B cell (primary cell): ENCODE measurements at regions of chr1 and their contacts with region 1.

Region 1: GRCh38 chr1:24930204-24931145 is at the start of gene RUNX3:
- DNase-seq: peak; percentile 97
- ATAC-seq: peak; percentile 85
- H3K4me3 ChIP-seq: peak within 1 kb of the TSS; percentile 74 to 93 (median 78)
- H3K4me3 Mint-ChIP-seq: peak within 1 kb of the TSS; percentile 98
- H3K27ac ChIP-seq: peak within 1 kb of the TSS; percentile 95 to 97
- H3K27ac Mint-ChIP-seq: peak within 1 kb of the TSS; percentile 99
- H3K4me1 ChIP-seq: peaks cover 67 to 77% of the 10 kb centered on the region in 2 donors
- H3K4me1 Mint-ChIP-seq: peaks cover 72% of the 10 kb centered on the region
- H3K27me3 ChIP-seq: no peaks in the 10 kb centered on the region
- H3K27me3 Mint-ChIP-seq: no peaks in the 10 kb centered on the region
- CTCF ChIP-seq: no peak
- total RNA-seq, gene RUNX3: 116 and 127 TPM in 2 replicates

Region 2: DNA sequence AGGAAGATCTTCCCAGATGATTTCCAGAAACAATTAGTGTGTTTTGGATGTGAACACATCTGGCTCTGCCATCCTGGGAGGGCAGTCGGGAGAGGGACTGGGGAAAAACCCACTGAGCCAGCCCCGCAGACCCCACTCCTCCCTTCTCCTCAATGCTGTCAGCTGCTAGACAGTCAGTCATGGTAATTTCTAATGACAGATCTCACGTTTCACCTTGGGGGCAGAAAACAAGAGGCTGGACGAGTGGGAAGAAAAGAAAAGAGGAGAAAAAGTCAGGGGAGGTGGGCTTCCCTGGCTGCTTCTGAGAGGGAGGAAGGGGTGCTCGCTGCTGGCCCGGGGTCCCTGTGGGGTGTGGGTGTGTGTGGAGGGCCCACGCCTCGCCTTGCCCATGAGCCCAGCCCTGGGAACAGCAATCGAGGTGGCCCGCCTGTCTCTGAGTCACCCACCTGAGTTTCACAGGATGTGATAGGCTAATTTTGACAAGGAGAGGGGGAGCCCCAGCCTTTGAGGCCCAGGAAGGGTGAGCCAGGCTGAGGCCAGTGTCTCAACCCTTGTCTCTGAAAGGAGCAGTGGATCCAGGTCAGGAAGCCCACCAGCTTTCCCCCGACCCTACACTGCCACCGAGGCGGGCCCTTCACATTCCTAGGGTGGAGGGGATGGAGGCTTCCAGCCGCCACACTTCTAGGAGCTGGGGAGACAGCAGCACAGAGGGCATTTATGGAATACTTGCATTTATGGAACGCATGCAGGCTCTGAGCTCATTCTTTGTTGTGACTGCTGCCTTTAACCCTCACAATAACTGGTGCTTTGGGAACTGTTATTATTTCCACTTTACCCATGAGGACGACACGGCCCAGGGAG is 694.3 kb before region 1 on chr1:
- CTCF ChIA-PET with region 1: no interaction called
- POLR2A ChIA-PET with region 1: no interaction called
- intact Hi-C with region 1: no loop called
- DNase-seq: no peak
- ATAC-seq: no peak
- H3K4me3 ChIP-seq: no peak overlapping the region
- H3K4me3 Mint-ChIP-seq: no peak overlapping the region
- H3K27ac ChIP-seq: no peak overlapping the region
- H3K27ac Mint-ChIP-seq: no peak overlapping the region
- H3K4me1 ChIP-seq: peaks cover 0 to 4% of the 10 kb centered on the region in 2 donors
- H3K4me1 Mint-ChIP-seq: peaks cover 8% of the 10 kb centered on the region
- H3K27me3 ChIP-seq: peaks cover 0 to 3% (median 0%) of the 10 kb centered on the region in 4 experiments
- H3K27me3 Mint-ChIP-seq: no peaks in the 10 kb centered on the region
- CTCF ChIP-seq: no peak

Region 3: GRCh38 chr1:24415334-24415909 is 515.1 kb before region 1 on chr1 and contains the start of gene NIPAL3:
- CTCF ChIA-PET with region 1: no interaction called
- POLR2A ChIA-PET with region 1: no interaction called
- intact Hi-C with region 1: loop called (anchors 2 kb)
- DNase-seq: peak; percentile 98
- ATAC-seq: peak; percentile 91
- H3K4me3 ChIP-seq: peak within 1 kb of the TSS; percentile 79 to 94 (median 86)
- H3K4me3 Mint-ChIP-seq: peak within 1 kb of the TSS; percentile 92
- H3K27ac ChIP-seq: peak within 1 kb of the TSS; percentile 37 to 55
- H3K27ac Mint-ChIP-seq: peak within 1 kb of the TSS; percentile 84
- H3K4me1 ChIP-seq: peaks cover 26 to 36% of the 10 kb centered on the region in 2 donors
- H3K4me1 Mint-ChIP-seq: peaks cover 49% of the 10 kb centered on the region
- H3K27me3 ChIP-seq: no peaks in the 10 kb centered on the region
- H3K27me3 Mint-ChIP-seq: no peaks in the 10 kb centered on the region
- CTCF ChIP-seq: peak; percentile 89
- total RNA-seq, gene NIPAL3: 31.6 and 38.8 TPM in 2 replicates

Region 4: DNA sequence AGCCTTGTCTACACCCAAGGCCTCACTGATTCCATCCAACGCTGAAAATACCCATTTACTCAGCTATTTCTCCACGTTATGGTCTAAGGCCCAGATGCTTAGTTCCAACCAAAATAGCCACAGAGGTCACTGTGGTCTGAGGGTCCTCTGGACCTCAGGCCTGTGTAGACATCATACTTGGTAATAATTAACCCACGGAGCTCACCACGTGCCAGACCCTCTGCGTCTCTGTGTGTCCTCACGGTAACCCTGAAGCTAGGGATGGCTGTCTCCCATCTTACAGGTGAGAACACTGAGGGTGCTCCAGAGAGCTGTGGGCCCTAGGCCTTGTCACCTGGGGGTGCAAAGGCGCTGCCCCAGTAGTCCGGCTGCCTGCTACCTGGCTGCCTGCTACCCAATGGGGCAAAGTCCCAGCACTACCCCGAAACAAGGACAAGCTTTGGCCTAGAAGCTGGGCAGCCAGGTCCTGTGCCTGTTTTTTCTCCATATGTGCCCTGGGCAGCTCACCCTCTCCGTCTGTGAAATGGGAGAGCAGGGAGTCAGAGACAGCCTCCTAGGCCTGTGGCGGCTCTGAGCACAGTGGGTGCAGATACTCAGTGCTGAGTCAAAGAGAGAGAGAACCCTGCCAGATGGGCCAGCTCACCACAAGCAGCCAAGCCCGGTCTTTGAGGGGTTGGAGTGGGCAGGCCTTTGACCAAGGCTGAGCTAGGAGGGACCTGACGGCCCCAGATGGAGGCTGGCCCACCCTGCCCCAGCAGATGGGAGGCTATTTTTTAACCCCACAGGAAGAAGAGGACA is 16.6 kb after region 1 on chr1:
- CTCF ChIA-PET with region 1: interaction called, 38 read pairs
- POLR2A ChIA-PET with region 1: interaction called, 3 read pairs
- intact Hi-C with region 1: no loop called
- DNase-seq: peak; percentile 23
- ATAC-seq: no peak
- H3K4me3 ChIP-seq: no peak overlapping the region
- H3K4me3 Mint-ChIP-seq: no peak overlapping the region
- H3K27ac ChIP-seq: no peak overlapping the region
- H3K27ac Mint-ChIP-seq: peak overlapping the region; percentile 32
- H3K4me1 ChIP-seq: peaks cover 13 to 34% of the 10 kb centered on the region in 2 donors
- H3K4me1 Mint-ChIP-seq: peaks cover 36% of the 10 kb centered on the region
- H3K27me3 ChIP-seq: no peaks in the 10 kb centered on the region
- H3K27me3 Mint-ChIP-seq: no peaks in the 10 kb centered on the region
- CTCF ChIP-seq: no peak

Region 5: DNA sequence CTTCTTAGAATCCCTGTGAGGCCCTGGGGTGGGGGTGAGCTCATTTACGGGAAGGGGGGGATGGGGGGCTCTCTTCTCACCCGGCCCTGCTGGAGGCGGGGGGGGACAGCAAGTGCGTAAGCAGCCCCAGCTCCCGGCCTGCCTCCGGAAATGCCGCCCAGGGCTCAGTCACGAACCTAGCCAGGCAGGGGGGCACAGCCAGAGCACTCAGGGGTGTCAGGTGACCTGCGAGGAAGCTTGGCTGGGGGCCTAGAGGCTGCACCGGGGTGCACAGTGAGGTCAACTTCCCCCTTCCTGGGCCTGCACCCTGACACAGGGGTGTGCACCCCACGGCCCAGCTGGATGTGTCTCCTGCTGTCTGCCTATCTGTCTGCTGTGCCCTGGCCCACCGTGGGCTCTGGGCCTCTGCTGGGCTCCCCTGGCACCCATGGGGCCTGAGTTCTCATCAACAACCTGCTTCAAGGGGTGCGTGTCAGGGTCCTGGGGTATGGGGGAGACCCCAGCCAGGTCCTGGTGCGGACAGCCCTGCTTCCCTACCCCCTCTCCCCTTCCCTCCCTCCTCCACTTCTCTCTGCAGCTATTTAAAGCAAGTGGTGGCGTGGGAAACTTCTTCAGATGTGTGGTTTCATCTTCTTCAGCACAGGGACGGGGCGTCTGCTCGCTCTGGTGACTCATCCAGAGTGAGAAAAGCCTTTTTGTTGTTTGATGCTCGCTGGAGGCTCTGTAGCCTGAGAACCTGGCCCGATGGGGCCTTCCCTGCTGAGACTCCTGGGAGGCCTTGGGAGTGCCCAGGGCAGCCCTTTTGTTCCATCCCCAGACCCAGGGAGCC is 92.1 kb after region 1 on chr1:
- CTCF ChIA-PET with region 1: interaction called, 32 read pairs
- POLR2A ChIA-PET with region 1: interaction called, 32 read pairs
- intact Hi-C with region 1: loop called (anchors 1 kb)
- DNase-seq: peak; percentile 98
- ATAC-seq: peak; percentile 78
- H3K4me3 ChIP-seq: peak overlapping the region in 4 of 5 experiments; percentile 2 to 32 (median 23)
- H3K4me3 Mint-ChIP-seq: peak overlapping the region; percentile 78
- H3K27ac ChIP-seq: peak overlapping the region; percentile 97
- H3K27ac Mint-ChIP-seq: peak overlapping the region; percentile 94
- H3K4me1 ChIP-seq: peaks cover 49 to 67% of the 10 kb centered on the region in 2 donors
- H3K4me1 Mint-ChIP-seq: peaks cover 65% of the 10 kb centered on the region
- H3K27me3 ChIP-seq: no peaks in the 10 kb centered on the region
- H3K27me3 Mint-ChIP-seq: no peaks in the 10 kb centered on the region
- CTCF ChIP-seq: no peak

Region 6: GRCh38 chr1:25099343-25099951 is 169.0 kb after region 1 on chr1:
- CTCF ChIA-PET with region 1: interaction called, 57 read pairs
- POLR2A ChIA-PET with region 1: interaction called, 6 read pairs
- intact Hi-C with region 1: loop called (anchors 1 kb)
- DNase-seq: peak; percentile 42
- ATAC-seq: peak; percentile 34
- H3K4me3 ChIP-seq: no peak overlapping the region
- H3K4me3 Mint-ChIP-seq: peak overlapping the region; percentile 65
- H3K27ac ChIP-seq: no peak overlapping the region
- H3K27ac Mint-ChIP-seq: peak overlapping the region; percentile 66
- H3K4me1 ChIP-seq: peaks cover 29 to 49% of the 10 kb centered on the region in 2 donors
- H3K4me1 Mint-ChIP-seq: peaks cover 44% of the 10 kb centered on the region
- H3K27me3 ChIP-seq: no peaks in the 10 kb centered on the region
- H3K27me3 Mint-ChIP-seq: no peaks in the 10 kb centered on the region
- CTCF ChIP-seq: no peak

Region 7: GRCh38 chr1:25247024-25247828 is 316.8 kb after region 1 on chr1 and contains the start of gene RSRP1:
- CTCF ChIA-PET with region 1: no interaction called
- POLR2A ChIA-PET with region 1: interaction called, 5 read pairs
- intact Hi-C with region 1: loop called (anchors 5 kb)
- DNase-seq: peak; percentile 99
- ATAC-seq: peak; percentile 86
- H3K4me3 ChIP-seq: peak within 1 kb of the TSS; percentile 91 to 99 (median 96)
- H3K4me3 Mint-ChIP-seq: peak within 1 kb of the TSS; percentile 99
- H3K27ac ChIP-seq: peak within 1 kb of the TSS; percentile 97 to 99
- H3K27ac Mint-ChIP-seq: peak within 1 kb of the TSS; percentile 100
- H3K4me1 ChIP-seq: peaks cover 25 to 26% of the 10 kb centered on the region in 2 donors
- H3K4me1 Mint-ChIP-seq: peaks cover 44% of the 10 kb centered on the region
- H3K27me3 ChIP-seq: no peaks in the 10 kb centered on the region
- H3K27me3 Mint-ChIP-seq: no peaks in the 10 kb centered on the region
- CTCF ChIP-seq: no peak
- total RNA-seq, gene RSRP1: 474 and 482 TPM in 2 replicates